ENCODE measurements at regions of chr5 and their contacts with region 1.

Region 1: GRCh38 chr5:110916381-110917049 is 155.0 kb upstream of the TSLP start:
- DNase-seq: no peak
- ATAC-seq: peak; percentile 78

Region 2: GRCh38 chr5:111072949-111073682 is 156.6 kb after region 1 on chr5:
- intact Hi-C with region 1: loop called (anchors 10 kb)
- DNase-seq: peak; percentile 82
- ATAC-seq: peak; percentile 93